GM23248 (cell line): ENCODE measurements at regions of chrX and their contacts with region 1.

Region 1: GRCh38 chrX:73855546-73855945 is 292.5 kb downstream of the CHIC1 start:
- DNase-seq: peak; percentile 75
- H3K4me3 ChIP-seq: no peak overlapping the region
- H3K27ac ChIP-seq: no peak overlapping the region
- H3K4me1 ChIP-seq: no peaks in the 10 kb centered on the region
- H3K27me3 ChIP-seq: no peaks in the 10 kb centered on the region

Region 2: DNA sequence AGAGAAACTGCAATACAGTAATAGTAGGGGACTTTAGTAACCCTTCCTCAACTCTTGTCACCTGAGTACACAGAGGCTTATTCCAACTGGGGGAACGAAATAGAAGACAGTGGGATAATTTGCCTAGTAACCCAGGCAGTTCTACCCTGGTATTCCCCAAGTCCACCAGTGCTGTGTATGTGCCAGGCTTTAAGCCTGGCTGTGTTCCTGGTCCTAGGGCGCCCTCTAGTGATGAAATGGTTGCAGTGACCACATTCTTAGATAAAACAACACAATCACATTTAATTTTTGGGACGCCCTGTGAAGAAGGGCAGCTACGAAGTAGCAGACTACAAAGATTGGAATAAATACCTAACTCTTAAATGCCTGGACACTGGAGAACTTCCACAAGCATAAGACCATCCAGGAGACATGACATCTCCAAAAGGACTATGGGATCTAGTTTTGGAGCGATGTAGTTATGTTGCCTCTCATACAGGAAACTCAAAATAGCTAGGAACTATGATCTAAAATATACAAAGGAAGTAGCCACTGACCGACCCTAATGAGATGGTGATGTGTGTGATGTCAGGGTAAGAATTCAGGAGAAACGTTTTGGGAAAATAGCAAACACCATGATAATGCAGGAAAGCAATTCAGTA is 160.0 kb after region 1 on chrX:
- in situ Hi-C with region 1: loop called (anchors 10 kb)
- DNase-seq: peak; percentile 56
- H3K4me3 ChIP-seq: no peak overlapping the region
- H3K27ac ChIP-seq: no peak overlapping the region
- H3K4me1 ChIP-seq: no peaks in the 10 kb centered on the region
- H3K27me3 ChIP-seq: no peaks in the 10 kb centered on the region

Region 3: DNA sequence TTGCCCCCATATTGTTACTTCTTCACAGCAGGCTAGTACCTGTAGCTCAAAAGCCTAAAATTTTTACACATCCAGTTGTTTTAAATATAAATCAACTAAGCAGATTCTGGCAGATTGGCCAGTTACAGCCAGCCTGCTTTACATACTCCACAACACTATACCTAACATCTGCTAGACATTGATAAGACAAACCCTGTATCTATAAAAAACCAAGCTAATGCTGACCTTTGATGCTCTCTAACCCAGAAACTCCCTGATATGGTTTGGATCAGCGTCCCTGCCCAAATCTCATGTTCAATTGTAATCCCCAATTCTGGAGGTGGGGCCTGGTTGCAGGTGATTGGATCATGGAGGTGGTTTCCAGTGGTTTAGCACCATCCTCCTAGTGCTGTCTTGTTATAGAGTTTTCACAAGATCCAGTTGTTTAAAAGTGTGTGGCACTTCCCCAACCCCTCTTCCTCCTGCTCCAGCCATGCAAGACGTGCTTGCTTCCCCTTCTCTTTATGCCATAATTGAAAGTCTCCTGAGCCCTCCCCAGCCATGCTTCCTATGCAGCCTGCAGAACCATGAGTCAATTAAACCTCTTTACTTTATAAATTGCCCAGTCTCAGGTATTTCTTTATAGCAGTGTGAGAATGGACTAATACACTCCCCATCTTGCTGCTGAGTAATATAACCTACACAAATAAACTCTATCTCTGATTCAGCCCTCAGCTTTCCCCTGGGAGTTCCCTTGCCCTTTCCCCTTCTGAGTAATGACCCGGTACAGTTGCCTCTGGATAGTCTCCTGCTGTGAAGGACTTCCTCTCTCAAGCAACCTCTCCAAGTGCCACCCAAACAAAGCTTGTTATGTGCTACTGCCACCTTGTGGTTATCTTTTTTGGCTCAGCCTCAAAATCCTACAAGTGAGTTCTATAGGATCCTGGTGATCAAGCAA is 488.1 kb after region 1 on chrX:
- in situ Hi-C with region 1: loop called (anchors 25 kb)
- DNase-seq: peak; percentile 92
- H3K4me3 ChIP-seq: no peak overlapping the region
- H3K27ac ChIP-seq: no peak overlapping the region
- H3K4me1 ChIP-seq: peaks cover 6% of the 10 kb centered on the region
- H3K27me3 ChIP-seq: no peaks in the 10 kb centered on the region